PC-3 (cell line): ENCODE measurements at regions of chr3 and their contacts with region 1.

Region 1: DNA sequence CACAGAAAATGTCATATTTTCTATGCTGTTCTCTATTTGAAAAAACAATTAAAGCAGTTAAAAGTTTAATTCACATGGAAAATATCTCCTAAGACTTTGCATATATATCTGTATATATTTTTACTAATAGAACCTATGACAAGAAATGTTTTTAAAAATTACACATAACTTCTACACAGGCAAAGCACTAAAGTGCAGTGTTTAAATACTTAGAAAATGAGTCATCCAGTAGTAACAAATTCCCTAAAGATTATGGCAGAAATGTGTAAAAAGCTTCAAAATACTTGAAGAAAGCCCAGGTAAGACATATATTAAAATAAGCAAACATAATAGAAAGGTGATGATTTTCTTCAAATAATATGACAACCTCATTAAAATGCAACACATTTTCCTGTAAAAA is 236.6 kb downstream of the TBC1D5 start:
- DNase-seq: peak; percentile 40
- ATAC-seq: peak; percentile 71
- H3K4me3 ChIP-seq: no peak overlapping the region
- H3K27ac ChIP-seq: no peak overlapping the region
- H3K4me1 ChIP-seq: peaks cover 19% of the 10 kb centered on the region
- H3K27me3 ChIP-seq: no peaks in the 10 kb centered on the region
- CTCF ChIP-seq: no peak

Region 2: GRCh38 chr3:17423786-17424536 is 81.9 kb before region 1 on chr3:
- CTCF ChIA-PET with region 1: no interaction called
- POLR2A ChIA-PET with region 1: no interaction called
- intact Hi-C with region 1: loop called (anchors 5 kb)
- DNase-seq: no peak
- ATAC-seq: peak; percentile 43
- H3K4me3 ChIP-seq: no peak overlapping the region
- H3K27ac ChIP-seq: no peak overlapping the region
- H3K4me1 ChIP-seq: peaks cover 7% of the 10 kb centered on the region; the same call in 1 of the 2 replicates
- H3K27me3 ChIP-seq: no peaks in the 10 kb centered on the region
- CTCF ChIP-seq: no peak